ENCODE measurements at regions of chr9 and their contacts with region 1.

Region 1: GRCh38 chr9:17810728-17811571 is 232.1 kb downstream of the SH3GL2 start:
- DNase-seq: peak; percentile 28
- H3K4me3 ChIP-seq: no peak overlapping the region
- H3K27ac ChIP-seq: no peak overlapping the region
- H3K4me1 ChIP-seq: no peaks in the 10 kb centered on the region
- H3K27me3 ChIP-seq: peaks cover 1% of the 10 kb centered on the region
- CTCF ChIP-seq: peak; percentile 72 to 85

Region 2: DNA sequence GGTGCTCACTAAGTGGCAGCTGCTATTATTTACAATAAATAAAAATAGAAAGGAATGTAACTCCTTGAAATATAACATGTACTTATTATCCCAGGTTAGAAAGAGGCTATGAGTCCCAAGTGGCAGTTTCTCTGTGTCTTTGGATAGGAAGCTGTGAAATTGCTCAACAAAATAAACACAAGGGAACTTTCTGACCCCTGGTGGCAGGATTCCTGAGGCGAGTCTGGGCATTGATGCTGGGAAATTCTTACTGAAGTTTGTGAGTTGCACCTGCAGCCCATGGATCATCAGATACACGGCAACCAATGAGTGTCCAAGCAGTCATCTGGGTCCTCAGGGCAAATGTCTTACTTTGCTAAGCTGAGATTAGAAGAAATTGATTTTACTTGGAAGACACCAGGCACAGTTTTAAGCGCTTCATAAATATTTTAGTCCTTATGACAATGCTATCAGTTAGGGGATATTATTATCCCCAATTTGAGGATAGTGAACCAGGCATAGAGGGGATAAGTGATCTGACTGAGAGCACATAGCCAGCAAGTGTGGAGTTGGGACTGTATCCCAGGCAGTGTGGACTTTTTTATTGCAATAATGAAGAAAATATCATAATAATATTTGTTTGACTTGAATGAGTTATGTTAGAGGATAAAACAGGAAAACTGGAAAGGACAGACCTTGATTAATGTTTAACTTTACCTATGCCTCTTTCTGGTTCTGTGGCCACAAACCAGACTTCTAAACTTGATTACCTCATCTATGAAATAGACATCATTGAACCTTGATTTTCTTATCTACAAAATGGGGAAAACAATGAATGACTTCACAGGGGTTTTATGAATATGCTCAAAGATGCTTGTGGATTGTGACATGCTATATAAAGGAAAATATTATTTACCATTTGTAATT is 397.5 kb after region 1 on chr9:
- CTCF ChIA-PET with region 1: interaction called, 4 read pairs
- dilution Hi-C with region 1: no loop called
- in situ Hi-C with region 1: loop called (anchors 5 kb)
- intact Hi-C with region 1: loop called (anchors 1 kb)
- DNase-seq: peak; percentile 65
- H3K4me3 ChIP-seq: no peak overlapping the region
- H3K27ac ChIP-seq: no peak overlapping the region
- H3K4me1 ChIP-seq: peaks cover 5% of the 10 kb centered on the region
- H3K27me3 ChIP-seq: no peaks in the 10 kb centered on the region
- CTCF ChIP-seq: peak; percentile 72 to 79

Region 3: DNA sequence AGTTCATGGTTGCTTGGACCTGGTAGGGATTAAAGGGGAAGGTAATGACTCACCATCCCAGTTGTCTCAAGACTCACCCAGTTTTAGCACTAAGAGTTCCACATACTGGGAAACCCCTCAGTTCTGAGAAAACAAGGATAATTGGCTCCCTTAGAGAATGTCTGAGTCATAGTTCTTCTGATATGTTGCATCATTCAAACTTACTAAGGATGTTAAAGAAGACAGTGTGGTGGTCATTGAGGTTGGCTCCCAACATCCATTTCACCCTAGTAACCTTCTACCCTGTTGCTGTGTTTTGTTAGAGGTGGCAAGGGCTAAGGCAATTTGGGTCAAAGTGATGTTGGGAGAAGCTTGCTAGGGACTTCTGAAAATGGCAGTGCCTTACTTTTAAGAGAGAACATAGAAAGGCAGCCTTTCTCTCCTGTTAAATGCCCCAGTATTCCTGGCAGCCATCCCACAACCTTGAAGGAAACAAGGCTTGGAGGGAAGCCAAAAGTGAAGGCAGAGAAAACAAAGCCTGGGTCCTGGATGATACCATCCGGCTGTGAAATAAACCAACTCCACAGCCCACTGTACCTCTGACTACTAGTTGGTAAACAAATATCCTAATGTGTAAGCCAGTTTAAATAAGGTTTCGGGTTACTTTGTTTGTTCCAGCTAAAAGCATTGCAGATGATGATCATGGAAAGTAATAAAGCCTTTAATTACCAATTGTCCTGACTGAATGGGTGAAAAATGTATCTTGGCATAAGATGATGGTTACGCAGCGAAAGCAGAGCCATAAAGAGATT is 582.6 kb after region 1 on chr9:
- CTCF ChIA-PET with region 1: interaction called, 4 read pairs
- dilution Hi-C with region 1: no loop called
- in situ Hi-C with region 1: no loop called
- intact Hi-C with region 1: loop called (anchors 5 kb)
- DNase-seq: peak; percentile 98
- H3K4me3 ChIP-seq: no peak overlapping the region
- H3K27ac ChIP-seq: peak overlapping the region; percentile 92
- H3K4me1 ChIP-seq: peaks cover 22% of the 10 kb centered on the region
- H3K27me3 ChIP-seq: no peaks in the 10 kb centered on the region
- CTCF ChIP-seq: no peak

Region 4: GRCh38 chr9:19028835-19029451 is 1218.0 kb after region 1 on chr9:
- CTCF ChIA-PET with region 1: no interaction called
- dilution Hi-C with region 1: no loop called
- in situ Hi-C with region 1: loop called (anchors 25 kb)
- intact Hi-C with region 1: loop called (anchors 1 kb)
- DNase-seq: peak; percentile 40
- H3K4me3 ChIP-seq: no peak overlapping the region
- H3K27ac ChIP-seq: no peak overlapping the region
- H3K4me1 ChIP-seq: no peaks in the 10 kb centered on the region
- H3K27me3 ChIP-seq: no peaks in the 10 kb centered on the region
- CTCF ChIP-seq: peak; percentile 58 to 72